SK-N-SH (cell line): ENCODE measurements at regions of chr19 and their contacts with region 1.

Region 1: GRCh38 chr19:35066691-35067563 is 25.4 kb downstream of the HPN start:
- DNase-seq: peak; percentile 90
- H3K4me3 ChIP-seq: no peak overlapping the region; a peak in 1 of 4 replicates
- H3K27ac ChIP-seq: no peak overlapping the region
- H3K4me1 ChIP-seq: no peaks in the 10 kb centered on the region; a peak in 1 of 4 replicates
- H3K27me3 ChIP-seq: 0 out of 2 replicates have a peak, but pooled peaks cover 3% of the 10 kb centered on the region
- CTCF ChIP-seq: peak; percentile 94
- EP300 ChIP-seq: no peak
- RAD21 ChIP-seq: peak; percentile 94

Region 2: GRCh38 chr19:35055715-35056179 is 11.2 kb before region 1 on chr19:
- CTCF ChIA-PET with region 1: interaction called, 51 read pairs
- POLR2A ChIA-PET with region 1: no interaction called
- DNase-seq: no peak
- H3K4me3 ChIP-seq: no peak overlapping the region
- H3K27ac ChIP-seq: no peak overlapping the region
- H3K4me1 ChIP-seq: no peaks in the 10 kb centered on the region
- H3K27me3 ChIP-seq: peaks cover 37% of the 10 kb centered on the region
- CTCF ChIP-seq: peak; percentile 24; the same call in 1 of the 2 replicates
- EP300 ChIP-seq: no peak
- RAD21 ChIP-seq: no peak

Region 3: DNA sequence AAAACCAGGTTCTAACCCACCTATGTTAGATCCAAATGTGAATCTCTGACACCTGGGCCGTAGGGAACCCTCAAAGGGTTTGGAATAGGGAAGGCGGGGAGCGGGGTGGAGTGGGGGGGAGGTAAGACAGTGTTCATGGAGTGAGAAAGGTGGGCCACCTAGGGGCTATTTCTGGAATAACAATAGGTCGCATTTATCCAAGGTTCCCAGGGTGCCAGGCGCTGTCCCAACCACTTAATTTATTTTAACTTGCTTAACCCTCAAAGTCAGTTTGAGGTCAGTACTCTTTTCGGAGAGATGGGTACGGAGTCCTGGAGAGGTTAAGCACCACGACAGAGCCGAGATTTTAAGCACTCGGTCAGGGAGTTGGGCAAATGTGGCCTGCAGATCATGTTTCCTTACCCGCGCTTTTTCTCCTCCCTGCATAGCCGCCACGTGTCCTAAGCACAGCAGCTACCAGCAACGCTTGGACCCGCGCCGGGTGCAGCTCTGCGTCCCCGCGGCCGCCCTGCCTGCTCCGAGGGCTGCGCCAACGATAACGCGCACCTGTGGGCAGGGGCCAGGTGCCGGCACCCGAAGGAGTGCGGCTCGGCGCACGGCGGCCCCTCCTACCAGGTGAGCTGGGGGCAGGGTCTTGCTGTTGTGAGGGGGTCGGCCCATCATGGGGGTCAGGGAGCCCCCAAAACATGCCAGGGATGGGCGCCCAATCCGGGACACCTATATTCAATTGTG is 23.7 kb after region 1 on chr19:
- CTCF ChIA-PET with region 1: interaction called, 49 read pairs
- POLR2A ChIA-PET with region 1: no interaction called
- DNase-seq: peak; percentile 90
- H3K4me3 ChIP-seq: no peak overlapping the region
- H3K27ac ChIP-seq: no peak overlapping the region
- H3K4me1 ChIP-seq: peaks cover 10 to 15% of the 10 kb centered on the region in 2 experiments; a peak in 2 of 4 replicates
- H3K27me3 ChIP-seq: no peaks in the 10 kb centered on the region
- CTCF ChIP-seq: peak; percentile 68
- EP300 ChIP-seq: no peak
- RAD21 ChIP-seq: peak; percentile 71

Region 4: DNA sequence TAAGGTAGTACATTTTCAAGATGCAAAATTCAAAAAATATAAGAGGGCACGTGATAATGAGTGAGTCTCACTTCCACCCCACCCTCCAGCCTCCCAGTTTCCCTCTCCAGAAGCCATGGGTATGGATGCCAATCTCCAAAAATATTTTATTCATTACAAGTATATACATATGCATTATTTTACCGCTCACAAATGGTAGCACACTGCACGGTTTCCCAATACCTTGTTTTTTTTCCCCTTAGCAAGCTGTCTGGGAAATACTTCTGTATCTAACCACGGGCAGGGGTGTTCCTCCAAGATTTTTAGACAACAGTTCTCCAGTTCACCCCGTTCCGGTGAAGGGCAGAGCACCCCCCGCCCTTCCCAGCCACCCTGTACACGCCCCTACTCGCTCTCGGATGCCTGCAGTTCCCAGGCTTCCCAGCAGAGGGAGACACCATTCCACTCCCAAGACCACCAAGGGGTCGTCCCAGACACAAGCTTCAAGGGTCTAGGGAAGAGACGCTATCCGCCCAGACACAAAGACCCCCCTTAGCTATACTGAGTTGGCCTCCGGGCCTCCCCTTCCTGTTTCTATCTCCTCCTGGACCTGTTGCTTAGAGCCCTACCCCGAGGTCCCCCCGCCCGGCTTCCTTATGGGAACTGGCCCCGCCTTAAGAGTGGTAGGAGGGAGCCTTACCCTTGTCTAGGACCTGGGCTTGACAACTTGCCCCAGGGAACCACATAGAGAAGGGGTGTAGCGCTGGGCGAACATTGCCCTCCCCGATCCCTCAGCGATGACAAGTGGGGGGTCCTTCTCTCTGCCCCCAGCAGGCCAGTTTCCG is 47.6 kb after region 1 on chr19:
- CTCF ChIA-PET with region 1: interaction called, 13 read pairs
- POLR2A ChIA-PET with region 1: no interaction called
- DNase-seq: peak; percentile 92
- H3K4me3 ChIP-seq: peak overlapping the region in 1 of 2 experiments; percentile 44; a peak in 1 of 4 replicates
- H3K27ac ChIP-seq: no peak overlapping the region
- H3K4me1 ChIP-seq: peaks cover 0 to 8% of the 10 kb centered on the region in 2 experiments; a peak in 1 of 4 replicates
- H3K27me3 ChIP-seq: no peaks in the 10 kb centered on the region; the same call in 1 of the 2 replicates
- CTCF ChIP-seq: peak; percentile 96
- EP300 ChIP-seq: no peak
- RAD21 ChIP-seq: peak; percentile 70

Region 5: DNA sequence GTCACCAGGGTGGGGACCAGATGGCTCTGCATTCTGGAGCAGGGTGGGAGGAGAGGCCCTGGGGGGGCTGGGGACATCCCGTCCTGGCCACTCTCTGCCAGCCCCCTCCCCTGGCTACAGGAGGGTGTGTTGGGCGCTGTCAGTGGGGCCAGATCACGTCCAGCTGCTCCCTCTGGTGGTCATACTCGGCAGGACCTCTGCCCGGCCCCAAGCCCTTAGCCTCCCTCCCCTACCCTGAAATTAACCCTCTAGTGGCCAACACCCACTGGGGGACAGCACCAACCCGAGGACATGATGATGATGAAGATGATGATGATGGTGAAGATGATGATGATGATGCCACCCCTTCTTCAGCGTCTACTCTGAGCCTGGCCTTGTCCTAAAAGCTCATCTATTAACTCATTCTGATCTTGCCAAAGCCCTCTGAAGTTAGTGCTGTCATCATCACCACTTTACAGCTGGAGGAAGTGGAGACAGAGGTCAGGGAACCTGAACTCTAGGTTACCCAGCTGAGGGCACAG is 68.5 kb after region 1 on chr19:
- CTCF ChIA-PET with region 1: interaction called, 65 read pairs
- POLR2A ChIA-PET with region 1: no interaction called
- DNase-seq: peak; percentile 98
- H3K4me3 ChIP-seq: no peak overlapping the region
- H3K27ac ChIP-seq: no peak overlapping the region
- H3K4me1 ChIP-seq: peaks cover 0 to 7% of the 10 kb centered on the region in 2 experiments; a peak in 1 of 4 replicates
- H3K27me3 ChIP-seq: peaks cover 15% of the 10 kb centered on the region; the same call in 1 of the 2 replicates
- CTCF ChIP-seq: peak; percentile 88
- EP300 ChIP-seq: 0 out of 4 replicates have a peak, but pooled peaks of 1 of the 2 experiments have one; percentile 14
- RAD21 ChIP-seq: peak; percentile 73

Region 6: GRCh38 chr19:35146746-35147459 is 80.0 kb after region 1 on chr19:
- CTCF ChIA-PET with region 1: interaction called, 39 read pairs
- POLR2A ChIA-PET with region 1: no interaction called
- DNase-seq: no peak
- H3K4me3 ChIP-seq: no peak overlapping the region
- H3K27ac ChIP-seq: no peak overlapping the region
- H3K4me1 ChIP-seq: peaks cover 0 to 15% of the 10 kb centered on the region in 2 experiments; a peak in 1 of 4 replicates
- H3K27me3 ChIP-seq: peaks cover 27% of the 10 kb centered on the region; the same call in 1 of the 2 replicates
- CTCF ChIP-seq: no peak
- EP300 ChIP-seq: no peak
- RAD21 ChIP-seq: no peak